ENCODE measurements at regions of chr16 and their contacts with region 1.

Region 1: DNA sequence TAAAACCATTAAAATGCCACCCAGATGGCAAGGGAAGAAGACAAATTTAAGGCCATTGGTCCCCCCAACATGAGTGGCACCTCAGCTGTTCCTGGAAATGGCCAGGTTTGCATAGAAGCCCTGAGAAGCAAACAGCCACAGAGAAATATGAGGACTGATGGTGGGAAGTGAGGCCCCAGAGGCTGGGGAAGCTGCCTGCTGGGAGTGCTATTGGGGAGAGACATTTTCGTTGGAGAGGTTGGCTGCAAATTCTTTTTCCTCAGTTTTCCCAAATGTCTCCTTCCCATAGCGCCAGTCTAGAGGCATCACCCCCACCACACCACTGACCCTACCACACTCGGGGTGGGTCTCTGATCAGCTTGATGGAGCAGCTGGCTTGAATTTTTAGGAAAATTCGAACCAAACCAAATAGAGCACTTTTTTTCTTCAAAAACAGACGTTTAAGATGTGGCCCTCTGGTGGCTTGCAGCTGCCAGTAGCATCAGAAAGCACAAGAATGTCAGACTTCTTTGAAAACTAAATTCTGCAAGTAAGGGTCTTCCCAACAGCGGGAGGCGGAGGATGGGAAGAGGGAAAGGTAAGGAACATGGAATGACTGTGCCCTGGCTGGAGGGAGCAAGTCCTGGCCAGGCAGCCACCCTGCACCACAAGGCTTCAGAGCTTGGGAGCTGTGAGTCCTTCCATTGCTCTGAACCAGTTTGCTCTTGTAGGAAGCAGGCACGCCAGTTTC is 13.2 kb upstream of the SLC12A3 start:
- DNase-seq: no peak
- ATAC-seq: no peak
- H3K4me3 ChIP-seq: no peak overlapping the region
- H3K4me3 Mint-ChIP-seq: no peak overlapping the region
- H3K27ac ChIP-seq: no peak overlapping the region
- H3K27ac Mint-ChIP-seq: no peak overlapping the region
- H3K4me1 ChIP-seq: peaks cover 10% of the 10 kb centered on the region
- H3K4me1 Mint-ChIP-seq: peaks cover 25% of the 10 kb centered on the region
- H3K27me3 ChIP-seq: no peaks in the 10 kb centered on the region
- H3K27me3 Mint-ChIP-seq: no peaks in the 10 kb centered on the region
- CTCF ChIP-seq: no peak

Region 2: DNA sequence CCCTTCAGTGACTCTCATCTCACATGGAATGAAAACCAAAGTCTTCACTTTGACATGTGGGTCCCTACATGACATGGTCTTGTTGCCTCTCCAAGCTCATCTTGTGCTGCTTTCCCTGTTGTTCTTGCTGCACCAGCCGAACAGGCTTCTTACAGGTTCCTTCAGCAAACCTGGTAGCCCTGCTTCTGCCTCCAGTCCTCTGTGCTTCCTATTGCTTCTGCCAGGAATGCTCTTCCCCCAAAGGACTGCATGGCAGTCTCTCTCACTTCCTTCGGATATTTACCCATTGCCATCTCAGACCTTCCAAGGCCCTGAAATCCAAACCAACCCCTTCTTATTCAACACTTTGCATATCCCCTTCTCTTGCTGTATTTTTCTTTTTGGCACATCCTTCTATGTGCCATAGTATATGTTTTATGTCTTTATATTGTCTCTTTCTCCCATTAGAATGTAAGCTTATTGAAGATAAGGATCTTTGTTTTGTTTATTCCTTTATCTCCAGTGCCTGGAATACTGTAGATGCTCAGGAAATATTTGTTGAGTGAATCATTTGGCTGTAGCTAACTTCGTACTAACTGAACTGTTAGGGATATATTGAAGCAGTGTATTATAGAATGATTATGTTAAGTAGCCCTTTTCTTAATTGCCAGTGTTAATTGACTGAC is 44.7 kb before region 1 on chr16:
- CTCF ChIA-PET with region 1: no interaction called
- POLR2A ChIA-PET with region 1: no interaction called
- intact Hi-C with region 1: loop called in 1 of 2 experiments (anchors 5 kb)
- DNase-seq: no peak
- ATAC-seq: no peak
- H3K4me3 ChIP-seq: no peak overlapping the region
- H3K4me3 Mint-ChIP-seq: no peak overlapping the region
- H3K27ac ChIP-seq: no peak overlapping the region
- H3K27ac Mint-ChIP-seq: no peak overlapping the region
- H3K4me1 ChIP-seq: no peaks in the 10 kb centered on the region
- H3K4me1 Mint-ChIP-seq: no peaks in the 10 kb centered on the region
- H3K27me3 ChIP-seq: no peaks in the 10 kb centered on the region
- H3K27me3 Mint-ChIP-seq: no peaks in the 10 kb centered on the region
- CTCF ChIP-seq: no peak

Region 3: GRCh38 chr16:56824331-56824730 is 27.5 kb before region 1 on chr16:
- CTCF ChIA-PET with region 1: no interaction called
- POLR2A ChIA-PET with region 1: no interaction called
- intact Hi-C with region 1: no loop called
- DNase-seq: no peak
- ATAC-seq: no peak
- H3K4me3 ChIP-seq: no peak overlapping the region
- H3K4me3 Mint-ChIP-seq: no peak overlapping the region
- H3K27ac ChIP-seq: no peak overlapping the region
- H3K27ac Mint-ChIP-seq: no peak overlapping the region
- H3K4me1 ChIP-seq: no peaks in the 10 kb centered on the region
- H3K4me1 Mint-ChIP-seq: peaks cover 9% of the 10 kb centered on the region
- H3K27me3 ChIP-seq: no peaks in the 10 kb centered on the region
- H3K27me3 Mint-ChIP-seq: no peaks in the 10 kb centered on the region
- CTCF ChIP-seq: no peak

Region 4: DNA sequence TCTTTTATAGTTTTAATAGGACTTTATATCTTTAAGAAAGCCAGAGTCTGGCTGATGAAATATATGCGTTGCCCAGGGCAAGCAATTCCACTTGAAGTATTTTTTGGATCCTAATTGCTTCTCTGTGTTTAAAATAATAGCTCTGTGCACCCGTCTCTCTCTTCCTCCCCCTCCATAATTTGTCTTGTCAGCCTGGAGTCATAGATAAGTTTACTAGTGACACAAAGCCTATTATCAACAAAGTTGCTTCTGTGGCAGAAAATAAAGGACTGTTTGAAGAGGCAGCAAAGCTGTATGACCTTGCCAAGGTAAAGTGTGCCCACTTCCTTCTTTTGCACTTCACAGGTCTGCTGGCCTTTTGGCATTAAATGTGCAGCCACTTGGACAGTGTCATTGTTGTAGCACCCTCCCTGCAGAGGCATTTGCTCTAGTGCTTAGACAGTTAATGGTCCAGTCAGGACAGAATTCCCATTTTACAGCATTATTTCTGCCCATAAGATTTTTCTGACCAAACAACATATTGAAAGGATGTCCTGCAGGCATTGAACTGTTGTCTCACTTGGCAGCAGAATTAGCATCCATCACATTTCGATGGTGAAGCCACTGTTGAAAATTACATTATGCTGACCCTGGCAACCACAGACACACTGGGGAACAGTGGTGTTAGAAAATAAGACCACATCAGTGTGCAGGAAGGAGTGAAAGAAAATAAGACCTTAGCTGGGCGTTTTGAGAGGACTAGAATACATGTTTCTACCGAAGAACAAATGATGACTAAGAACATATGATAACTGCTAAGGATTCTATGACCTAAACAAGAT is 15.2 kb before region 1 on chr16:
- CTCF ChIA-PET with region 1: interaction called, 3 read pairs
- POLR2A ChIA-PET with region 1: interaction called, 10 read pairs
- intact Hi-C with region 1: no loop called
- DNase-seq: no peak
- ATAC-seq: no peak
- H3K4me3 ChIP-seq: no peak overlapping the region
- H3K4me3 Mint-ChIP-seq: no peak overlapping the region
- H3K27ac ChIP-seq: no peak overlapping the region
- H3K27ac Mint-ChIP-seq: no peak overlapping the region
- H3K4me1 ChIP-seq: no peaks in the 10 kb centered on the region
- H3K4me1 Mint-ChIP-seq: peaks cover 19% of the 10 kb centered on the region
- H3K27me3 ChIP-seq: no peaks in the 10 kb centered on the region
- H3K27me3 Mint-ChIP-seq: no peaks in the 10 kb centered on the region
- CTCF ChIP-seq: no peak

Measured in CD8-positive, alpha-beta T cell (primary cell).